ENCODE measurements at regions of chr19 and their contacts with region 1.

Region 1: DNA sequence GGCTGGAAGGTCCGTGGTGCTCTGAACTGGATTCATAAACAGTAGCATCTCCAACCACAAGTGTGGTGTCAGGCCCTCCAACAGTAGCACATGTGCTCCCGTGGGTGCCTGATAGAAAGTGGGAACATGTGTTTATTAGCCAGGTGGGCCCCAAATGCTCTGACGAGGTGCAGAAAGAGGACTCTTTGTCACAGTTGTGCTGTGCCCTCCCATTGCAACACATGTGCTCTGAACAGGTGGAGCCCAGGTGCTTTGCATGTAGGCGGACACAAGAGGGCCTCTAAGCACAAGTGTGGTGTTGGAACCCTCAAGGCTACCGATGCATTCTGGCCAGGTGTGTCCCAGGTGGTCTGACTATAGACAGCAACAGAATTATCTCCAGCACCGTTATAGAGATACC is 75.3 kb upstream of the ZNF30 start:
- DNase-seq: peak in 1 of 9 donors; percentile 13
- ATAC-seq: no peak
- H3K4me3 ChIP-seq: no peak overlapping the region
- H3K4me3 Mint-ChIP-seq: no peak overlapping the region
- H3K27ac ChIP-seq: no peak overlapping the region
- H3K27ac Mint-ChIP-seq: peak overlapping the region in 4 of 9 donors; percentile 50 to 75 (median 62)
- H3K4me1 ChIP-seq: no peaks in the 10 kb centered on the region
- H3K4me1 Mint-ChIP-seq: peaks cover under 1 to 64% (median 43%) of the 10 kb centered on the region in 7 donors
- H3K27me3 ChIP-seq: no peaks in the 10 kb centered on the region
- H3K27me3 Mint-ChIP-seq: no peaks in the 10 kb centered on the region

Region 2: GRCh38 chr19:34759218-34759917 is 92.0 kb before region 1 on chr19:
- CTCF ChIA-PET with region 1: no interaction called
- POLR2A ChIA-PET with region 1: no interaction called
- intact Hi-C with region 1: loop called in 1 of 2 experiments (anchors 10 kb)
- DNase-seq: no peak
- ATAC-seq: no peak
- H3K4me3 ChIP-seq: no peak overlapping the region
- H3K4me3 Mint-ChIP-seq: no peak overlapping the region
- H3K27ac ChIP-seq: no peak overlapping the region
- H3K27ac Mint-ChIP-seq: no peak overlapping the region
- H3K4me1 ChIP-seq: no peaks in the 10 kb centered on the region
- H3K4me1 Mint-ChIP-seq: no peaks in the 10 kb centered on the region
- H3K27me3 ChIP-seq: no peaks in the 10 kb centered on the region
- H3K27me3 Mint-ChIP-seq: no peaks in the 10 kb centered on the region

Region 3: GRCh38 chr19:34926685-34927375 is 75.5 kb after region 1 on chr19 and contains the start of gene ZNF30:
- CTCF ChIA-PET with region 1: no interaction called
- POLR2A ChIA-PET with region 1: no interaction called
- intact Hi-C with region 1: loop called in 1 of 2 experiments (anchors 5 kb)
- DNase-seq: peak; percentile 57 to 78 (median 74)
- ATAC-seq: peak; percentile 95
- H3K4me3 ChIP-seq: peak within 1 kb of the TSS; percentile 76
- H3K4me3 Mint-ChIP-seq: peak within 1 kb of the TSS; percentile 84 to 95 (median 92)
- H3K27ac ChIP-seq: peak within 1 kb of the TSS; percentile 61
- H3K27ac Mint-ChIP-seq: peak within 1 kb of the TSS; percentile 49 to 84 (median 72)
- H3K4me1 ChIP-seq: peaks cover 0 to 5% of the 10 kb centered on the region in 2 donors
- H3K4me1 Mint-ChIP-seq: peaks cover 10 to 34% (median 23%) of the 10 kb centered on the region in 7 donors
- H3K27me3 ChIP-seq: no peaks in the 10 kb centered on the region
- H3K27me3 Mint-ChIP-seq: peaks cover 0 to 6% (median 0%) of the 10 kb centered on the region in 5 donors
- total RNA-seq, gene ZNF30: 2.0 to 13.1 (median 3.5) TPM